CD4-positive, alpha-beta memory T cell (primary cell): ENCODE measurements at regions of chr14 and their contacts with region 1.

Region 1: GRCh38 chr14:91249841-91250616 is 5.5 kb upstream of the GPR68 start:
- DNase-seq: peak; percentile 41 to 72 (median 53)
- H3K4me3 ChIP-seq: peak overlapping the region in 1 of 2 donors; percentile 25
- H3K4me3 Mint-ChIP-seq: peak overlapping the region; percentile 61 to 75 (median 68)
- H3K27ac ChIP-seq: peak overlapping the region; percentile 75
- H3K27ac Mint-ChIP-seq: peak overlapping the region; percentile 92 to 99 (median 97)
- H3K4me1 ChIP-seq: peaks cover 95% of the 10 kb centered on the region
- H3K4me1 Mint-ChIP-seq: peaks cover 64 to 90% (median 80%) of the 10 kb centered on the region in 4 donors
- H3K27me3 ChIP-seq: no peaks in the 10 kb centered on the region
- H3K27me3 Mint-ChIP-seq: no peaks in the 10 kb centered on the region

Region 2: GRCh38 chr14:91193069-91193468 is 57.0 kb before region 1 on chr14:
- CTCF ChIA-PET with region 1: interaction called, 3 read pairs
- POLR2A ChIA-PET with region 1: interaction called, 34 read pairs
- intact Hi-C with region 1: loop called (anchors 5 kb)
- DNase-seq: no peak
- H3K4me3 ChIP-seq: no peak overlapping the region
- H3K4me3 Mint-ChIP-seq: peak overlapping the region in 1 of 8 donors; percentile 55
- H3K27ac ChIP-seq: no peak overlapping the region
- H3K27ac Mint-ChIP-seq: peak overlapping the region in 4 of 7 donors; percentile 3 to 44 (median 40)
- H3K4me1 ChIP-seq: peaks cover 14% of the 10 kb centered on the region
- H3K4me1 Mint-ChIP-seq: peaks cover 18 to 31% (median 25%) of the 10 kb centered on the region in 4 donors
- H3K27me3 ChIP-seq: no peaks in the 10 kb centered on the region
- H3K27me3 Mint-ChIP-seq: no peaks in the 10 kb centered on the region

Region 3: GRCh38 chr14:91219517-91220389 is 30.3 kb before region 1 on chr14:
- CTCF ChIA-PET with region 1: no interaction called
- POLR2A ChIA-PET with region 1: interaction called, 963 read pairs
- intact Hi-C with region 1: loop called (anchors 5 kb)
- DNase-seq: no peak
- H3K4me3 ChIP-seq: no peak overlapping the region
- H3K4me3 Mint-ChIP-seq: no peak overlapping the region
- H3K27ac ChIP-seq: no peak overlapping the region
- H3K27ac Mint-ChIP-seq: peak overlapping the region in 6 of 7 donors; percentile 11 to 73 (median 40)
- H3K4me1 ChIP-seq: peaks cover 34% of the 10 kb centered on the region
- H3K4me1 Mint-ChIP-seq: peaks cover 33 to 57% (median 44%) of the 10 kb centered on the region in 4 donors
- H3K27me3 ChIP-seq: no peaks in the 10 kb centered on the region
- H3K27me3 Mint-ChIP-seq: no peaks in the 10 kb centered on the region

Region 4: GRCh38 chr14:91228112-91229004 is 21.7 kb before region 1 on chr14:
- CTCF ChIA-PET with region 1: interaction called, 45 read pairs
- POLR2A ChIA-PET with region 1: interaction called, 963 read pairs
- intact Hi-C with region 1: loop called (anchors 1 kb)
- DNase-seq: peak; percentile 74 to 96 (median 77)
- H3K4me3 ChIP-seq: peak overlapping the region; percentile 2 to 28
- H3K4me3 Mint-ChIP-seq: peak overlapping the region; percentile 41 to 97 (median 86)
- H3K27ac ChIP-seq: peak overlapping the region; percentile 88
- H3K27ac Mint-ChIP-seq: peak overlapping the region; percentile 97 to 100 (median 99)
- H3K4me1 ChIP-seq: peaks cover 98% of the 10 kb centered on the region
- H3K4me1 Mint-ChIP-seq: peaks cover 78 to 100% (median 91%) of the 10 kb centered on the region in 4 donors
- H3K27me3 ChIP-seq: no peaks in the 10 kb centered on the region
- H3K27me3 Mint-ChIP-seq: no peaks in the 10 kb centered on the region

Region 5: GRCh38 chr14:91264151-91265150 is 14.4 kb after region 1 on chr14:
- CTCF ChIA-PET with region 1: interaction called, 7 read pairs
- POLR2A ChIA-PET with region 1: interaction called, 124 read pairs
- intact Hi-C with region 1: no loop called
- DNase-seq: peak in 2 of 5 donors; percentile 39 to 41
- H3K4me3 ChIP-seq: peak overlapping the region in 1 of 2 donors; percentile 32
- H3K4me3 Mint-ChIP-seq: peak overlapping the region; percentile 69 to 85 (median 79)
- H3K27ac ChIP-seq: peak overlapping the region; percentile 31
- H3K27ac Mint-ChIP-seq: peak overlapping the region in 6 of 7 donors; percentile 60 to 97 (median 84)
- H3K4me1 ChIP-seq: peaks cover 45% of the 10 kb centered on the region
- H3K4me1 Mint-ChIP-seq: peaks cover 39 to 69% (median 46%) of the 10 kb centered on the region in 4 donors
- H3K27me3 ChIP-seq: no peaks in the 10 kb centered on the region
- H3K27me3 Mint-ChIP-seq: no peaks in the 10 kb centered on the region